Activated naive CD4-positive, alpha-beta T cell treated with anti-CD3 and anti-CD28 coated beads for 36 hours (primary cell): ENCODE measurements at regions of chr14 and their contacts with region 1.

Region 1: GRCh38 chr14:92612988-92613658 is 99.5 kb downstream of the RIN3 start:
- DNase-seq: peak; percentile 87
- H3K4me3 Mint-ChIP-seq: no peak overlapping the region
- H3K27ac Mint-ChIP-seq: no peak overlapping the region
- H3K4me1 Mint-ChIP-seq: peaks cover 52% of the 10 kb centered on the region
- H3K27me3 Mint-ChIP-seq: no peaks in the 10 kb centered on the region

Region 2: GRCh38 chr14:92632546-92633273 is 19.6 kb after region 1 on chr14:
- CTCF ChIA-PET with region 1: interaction called, 22 read pairs
- intact Hi-C with region 1: no loop called
- DNase-seq: no peak
- H3K4me3 Mint-ChIP-seq: no peak overlapping the region
- H3K27ac Mint-ChIP-seq: no peak overlapping the region
- H3K4me1 Mint-ChIP-seq: peaks cover 8% of the 10 kb centered on the region
- H3K27me3 Mint-ChIP-seq: no peaks in the 10 kb centered on the region

Region 3: GRCh38 chr14:92644171-92644969 is 31.2 kb after region 1 on chr14:
- CTCF ChIA-PET with region 1: interaction called, 14 read pairs
- intact Hi-C with region 1: loop called (anchors 1 kb)
- DNase-seq: no peak
- H3K4me3 Mint-ChIP-seq: no peak overlapping the region
- H3K27ac Mint-ChIP-seq: no peak overlapping the region
- H3K4me1 Mint-ChIP-seq: peaks cover 45% of the 10 kb centered on the region
- H3K27me3 Mint-ChIP-seq: no peaks in the 10 kb centered on the region

Region 4: DNA sequence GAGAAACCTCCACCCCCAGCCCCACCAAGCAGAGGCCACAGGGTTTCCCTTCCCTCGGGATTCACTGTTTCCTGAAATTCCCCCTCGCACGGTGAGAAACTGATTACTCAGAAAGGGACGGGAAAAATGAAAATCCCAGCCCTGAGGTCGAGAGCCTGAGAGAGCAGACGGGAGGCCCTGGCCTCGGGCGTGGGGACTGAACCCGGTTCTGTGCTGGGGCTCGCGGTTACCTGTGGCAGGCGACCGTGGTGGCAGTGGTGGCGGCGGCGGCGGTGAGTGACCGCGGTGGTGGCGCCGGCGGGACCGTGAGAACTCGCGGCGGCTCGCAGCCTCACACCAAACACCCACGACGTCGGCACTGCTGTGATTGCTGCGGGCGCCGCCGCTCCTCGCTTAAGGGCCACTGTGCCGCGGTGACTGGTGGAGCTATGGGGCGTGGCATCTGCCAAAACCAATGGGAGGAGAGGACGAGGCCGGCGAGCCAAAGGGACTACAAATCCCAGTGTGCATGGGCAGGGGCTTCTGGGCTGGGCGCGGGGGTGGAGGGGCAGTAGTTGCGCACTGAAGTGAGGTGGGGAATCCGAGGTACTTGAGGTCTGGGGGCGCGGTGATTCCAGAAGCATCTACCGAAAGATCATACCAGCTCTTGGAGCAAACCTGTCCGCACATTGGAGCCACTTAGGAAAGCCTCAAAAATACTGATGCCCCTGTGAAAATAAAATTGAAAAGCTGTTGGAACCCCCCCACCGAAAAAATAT is 135.3 kb after region 1 on chr14 and contains the start of gene LGMN:
- CTCF ChIA-PET with region 1: no interaction called
- intact Hi-C with region 1: no loop called
- DNase-seq: peak; percentile 90
- H3K4me3 Mint-ChIP-seq: peak within 1 kb of the TSS; percentile 81
- H3K27ac Mint-ChIP-seq: no peak within 1 kb of the TSS
- H3K4me1 Mint-ChIP-seq: peaks cover 35% of the 10 kb centered on the region
- H3K27me3 Mint-ChIP-seq: peaks cover 4% of the 10 kb centered on the region
- total RNA-seq, gene LGMN: 6.9 to 7.7 TPM

Region 5: DNA sequence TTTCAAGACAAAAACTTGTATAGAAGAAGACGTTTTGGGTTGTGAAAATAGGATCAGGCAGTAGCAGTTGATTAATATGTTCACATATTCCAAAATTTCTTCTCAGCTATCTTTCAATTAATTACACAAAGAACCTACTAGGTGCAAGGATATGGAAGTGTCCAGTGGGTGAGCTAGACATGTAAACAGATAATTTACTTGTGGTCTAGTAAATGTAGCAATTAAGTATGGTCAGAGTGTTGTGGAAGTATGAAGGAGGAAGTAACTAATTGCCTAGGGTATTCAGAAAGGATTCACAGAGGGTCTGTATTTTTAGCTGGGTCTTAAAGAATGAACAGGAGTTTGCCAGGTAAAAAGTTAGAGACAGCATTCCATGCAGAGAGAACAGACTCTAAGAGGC is 186.9 kb after region 1 on chr14:
- CTCF ChIA-PET with region 1: no interaction called
- intact Hi-C with region 1: no loop called
- DNase-seq: no peak
- H3K4me3 Mint-ChIP-seq: no peak overlapping the region
- H3K27ac Mint-ChIP-seq: no peak overlapping the region
- H3K4me1 Mint-ChIP-seq: peaks cover 68% of the 10 kb centered on the region
- H3K27me3 Mint-ChIP-seq: no peaks in the 10 kb centered on the region

Region 6: GRCh38 chr14:92819011-92819597 is 206.0 kb after region 1 on chr14:
- CTCF ChIA-PET with region 1: no interaction called
- intact Hi-C with region 1: no loop called
- DNase-seq: no peak
- H3K4me3 Mint-ChIP-seq: no peak overlapping the region
- H3K27ac Mint-ChIP-seq: no peak overlapping the region
- H3K4me1 Mint-ChIP-seq: no peaks in the 10 kb centered on the region
- H3K27me3 Mint-ChIP-seq: no peaks in the 10 kb centered on the region